Heart left ventricle (tissue), 16 donors: ENCODE measurements at regions of chr6 and their contacts with region 1.

Region 1: DNA sequence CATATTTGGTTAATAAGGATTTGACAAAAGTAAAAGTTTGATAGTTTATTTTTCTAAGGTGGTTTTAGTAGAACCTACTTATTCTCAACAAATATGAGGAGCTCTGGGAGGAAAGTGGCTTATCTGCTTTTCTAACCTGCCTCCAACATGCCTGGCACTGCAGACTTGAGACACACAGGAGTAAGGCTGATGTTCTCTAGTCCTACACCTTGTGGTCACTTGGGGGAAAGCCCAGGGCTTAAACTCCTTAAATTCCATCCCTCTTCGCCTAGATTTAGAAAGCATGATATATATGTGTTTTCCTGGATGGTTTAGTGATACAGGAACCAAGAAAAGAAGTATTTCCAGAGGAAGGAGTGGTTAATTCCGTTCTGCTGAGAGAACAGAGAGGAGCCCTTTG is 39.9 kb upstream of the SAMD5 start:
- DNase-seq: no peak
- ATAC-seq: no peak
- H3K4me3 ChIP-seq: no peak overlapping the region
- H3K27ac ChIP-seq: no peak overlapping the region
- H3K4me1 ChIP-seq: no peaks in the 10 kb centered on the region
- H3K27me3 ChIP-seq: no peaks in the 10 kb centered on the region
- CTCF ChIP-seq: no peak
- POLR2A ChIP-seq: no peak

Region 2: DNA sequence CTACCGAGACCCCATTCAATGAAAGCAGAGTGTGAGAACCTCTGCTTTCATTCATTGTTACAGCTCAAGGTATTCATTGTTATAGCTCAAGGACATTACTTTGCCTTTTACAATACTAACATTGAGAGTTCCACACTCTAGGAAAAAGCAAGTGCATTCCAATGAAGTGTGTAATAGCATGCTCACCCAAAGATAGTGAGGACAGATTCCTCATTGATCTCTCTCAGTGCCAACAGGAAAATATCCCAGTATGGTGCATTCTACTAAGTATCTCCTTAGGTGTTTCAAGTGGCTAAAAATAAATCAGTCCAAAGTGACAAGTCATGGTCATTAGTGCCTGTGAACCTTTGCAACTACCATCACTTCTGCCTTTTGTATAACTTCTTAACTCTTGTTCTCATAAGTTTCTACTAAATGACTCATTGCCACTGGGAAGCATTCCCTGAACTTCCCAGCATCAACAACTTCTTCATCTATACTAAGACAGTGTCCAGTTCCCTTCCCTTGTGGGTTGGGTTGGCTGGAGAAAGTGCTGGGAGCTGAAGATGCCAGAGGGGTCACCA is 405.1 kb before region 1 on chr6:
- intact Hi-C with region 1: no loop called
- DNase-seq: no peak
- ATAC-seq: no peak
- H3K4me3 ChIP-seq: no peak overlapping the region
- H3K27ac ChIP-seq: no peak overlapping the region
- H3K4me1 ChIP-seq: peaks cover 0 to 7% (median 0%) of the 10 kb centered on the region in 12 donors
- H3K27me3 ChIP-seq: no peaks in the 10 kb centered on the region
- CTCF ChIP-seq: no peak
- POLR2A ChIP-seq: no peak

Region 3: DNA sequence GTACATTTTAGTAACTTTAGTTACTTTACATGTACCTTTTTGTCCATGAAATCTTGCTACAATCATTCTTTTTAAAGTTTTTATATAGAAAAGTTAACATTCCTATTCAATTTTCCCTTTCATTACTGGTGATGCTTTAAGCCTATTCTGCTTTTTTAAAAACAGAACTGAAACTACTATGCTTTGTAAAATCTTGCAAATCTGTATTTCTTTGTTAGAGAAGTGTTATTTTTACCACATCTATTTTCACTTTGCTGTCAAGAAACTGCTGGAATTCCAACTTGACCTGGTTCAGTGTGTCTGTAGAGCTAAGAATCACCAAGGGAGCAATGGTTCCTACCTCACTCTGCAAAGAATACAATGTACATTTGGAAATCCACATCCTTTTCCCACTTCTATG is 18.0 kb after region 1 on chr6:
- intact Hi-C with region 1: loop called in 1 of 10 experiments (anchors 1 kb)
- DNase-seq: no peak
- ATAC-seq: no peak
- H3K4me3 ChIP-seq: no peak overlapping the region
- H3K27ac ChIP-seq: no peak overlapping the region
- H3K4me1 ChIP-seq: no peaks in the 10 kb centered on the region
- H3K27me3 ChIP-seq: no peaks in the 10 kb centered on the region
- CTCF ChIP-seq: no peak
- POLR2A ChIP-seq: no peak

Region 4: DNA sequence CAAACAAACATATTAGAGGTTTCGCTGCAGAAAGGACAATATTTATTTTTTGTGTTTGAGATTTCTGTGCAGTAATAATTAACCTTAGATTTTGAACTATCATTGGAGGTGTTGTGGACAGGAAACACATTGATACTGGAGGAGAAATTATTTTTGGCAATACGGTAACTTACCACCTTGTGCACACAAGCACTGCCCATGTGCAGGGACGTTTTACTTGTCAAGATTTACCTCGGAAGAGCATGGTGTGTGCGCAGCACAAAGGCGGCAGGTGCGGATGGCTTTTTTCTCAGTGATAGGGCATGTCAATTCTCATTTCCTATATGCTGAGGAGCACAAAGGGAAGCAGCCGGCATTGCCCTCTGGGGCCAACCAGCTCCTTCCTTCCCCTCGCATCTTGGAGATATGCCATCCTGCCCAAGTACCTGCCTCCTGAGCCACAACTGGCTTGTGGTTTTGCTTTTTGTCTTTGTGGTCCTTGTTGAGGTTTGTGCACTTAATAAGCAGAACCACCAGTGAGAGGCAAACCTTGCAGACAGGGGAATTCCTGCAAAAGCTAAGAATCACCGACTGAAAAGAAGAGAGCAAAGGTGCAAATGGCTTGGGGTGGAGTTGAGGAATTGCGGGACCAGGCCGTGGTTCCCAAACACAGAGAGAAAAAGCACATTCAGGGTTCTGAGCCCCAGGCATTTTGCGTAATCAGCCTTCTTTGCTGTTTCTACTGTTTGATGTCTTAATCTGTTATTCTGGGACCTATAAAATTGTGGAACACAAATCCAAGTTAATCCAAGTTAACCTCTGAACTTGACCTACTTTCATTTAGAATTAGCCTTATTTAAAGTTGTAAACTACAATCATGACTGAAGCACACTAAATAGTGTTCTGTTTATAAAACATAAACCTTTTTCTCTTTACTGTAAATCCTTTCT is 61.8 kb after region 1 on chr6:
- intact Hi-C with region 1: no loop called
- DNase-seq: no peak
- ATAC-seq: no peak
- H3K4me3 ChIP-seq: no peak overlapping the region
- H3K27ac ChIP-seq: no peak overlapping the region
- H3K4me1 ChIP-seq: no peaks in the 10 kb centered on the region
- H3K27me3 ChIP-seq: no peaks in the 10 kb centered on the region
- CTCF ChIP-seq: no peak
- POLR2A ChIP-seq: no peak